AG04449 (cell line): ENCODE measurements at regions of chr17 and their contacts with region 1.

Region 1: DNA sequence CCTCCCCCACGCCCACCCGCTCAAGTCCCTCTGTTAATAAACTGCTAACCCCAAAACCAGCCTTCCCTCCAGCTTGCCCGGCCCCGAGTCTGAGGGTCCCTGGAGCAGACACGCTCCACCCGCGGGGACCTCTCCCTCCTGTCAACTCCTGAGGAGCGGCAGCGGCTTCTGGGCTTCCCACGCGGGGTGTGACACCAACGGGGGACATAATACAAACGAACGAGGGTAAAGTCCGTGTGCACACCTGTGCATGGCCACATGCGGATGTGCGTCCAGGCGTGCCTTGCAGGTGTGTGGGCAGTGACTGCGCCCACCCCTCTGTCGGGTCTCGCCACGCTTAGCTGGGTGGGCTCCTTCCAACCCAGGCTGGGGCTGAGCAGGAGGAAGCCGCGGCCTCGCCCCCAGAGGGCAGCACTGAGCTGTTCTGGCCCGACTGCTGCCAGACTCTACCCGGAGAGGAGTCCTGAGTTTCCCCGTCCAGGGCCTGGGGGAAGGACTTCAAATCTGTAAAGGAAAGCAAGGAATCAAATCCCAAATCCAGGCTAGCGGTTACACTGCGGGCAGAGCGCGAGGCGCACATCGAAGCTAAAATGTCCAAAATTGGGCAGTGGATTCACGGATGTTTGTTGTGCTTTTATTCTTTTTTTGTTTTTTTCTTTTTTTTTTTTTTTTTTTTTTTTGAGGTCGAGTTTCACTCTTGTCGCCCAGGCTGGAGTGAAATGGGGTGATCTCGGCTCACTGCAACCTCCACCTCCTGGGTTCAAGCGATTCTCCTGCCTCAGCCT is 24.2 kb upstream of the KRT17 start:
- DNase-seq: no peak
- H3K4me3 ChIP-seq: peak overlapping the region; percentile 50
- CTCF ChIP-seq: peak; percentile 95

Region 2: GRCh38 chr17:40825599-40825998 is 823.0 kb before region 1 on chr17:
- CTCF ChIA-PET with region 1: interaction called, 14 read pairs
- POLR2A ChIA-PET with region 1: no interaction called
- DNase-seq: no peak
- H3K4me3 ChIP-seq: no peak overlapping the region
- CTCF ChIP-seq: no peak

Region 3: DNA sequence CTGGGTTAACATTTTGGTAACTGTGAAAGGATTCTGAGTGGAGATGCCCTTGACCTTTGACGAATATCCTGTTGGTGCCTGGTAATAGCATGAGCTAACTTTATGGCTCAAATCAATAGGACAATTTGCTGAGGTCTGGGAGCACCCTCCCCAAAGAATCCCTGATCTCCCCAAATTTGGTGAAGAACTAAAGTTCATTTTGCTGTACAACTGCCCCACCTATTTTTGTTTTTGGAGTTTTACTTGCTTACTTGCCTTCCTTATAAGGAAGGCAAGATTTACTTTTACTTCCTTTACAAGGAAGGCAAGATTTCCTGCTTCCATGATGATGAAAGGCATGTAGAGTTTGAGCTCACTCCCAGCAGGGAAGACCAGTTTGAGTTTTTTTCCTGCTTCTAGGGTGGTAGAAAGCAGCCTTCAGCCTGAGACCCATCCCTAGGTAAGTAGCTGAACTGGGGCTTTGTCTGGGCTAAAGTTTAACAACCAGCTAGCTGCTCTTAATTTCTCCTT is 540.6 kb before region 1 on chr17:
- CTCF ChIA-PET with region 1: interaction called, 10 read pairs
- POLR2A ChIA-PET with region 1: no interaction called
- DNase-seq: no peak
- H3K4me3 ChIP-seq: peak overlapping the region; percentile 40
- CTCF ChIP-seq: no peak

Region 4: DNA sequence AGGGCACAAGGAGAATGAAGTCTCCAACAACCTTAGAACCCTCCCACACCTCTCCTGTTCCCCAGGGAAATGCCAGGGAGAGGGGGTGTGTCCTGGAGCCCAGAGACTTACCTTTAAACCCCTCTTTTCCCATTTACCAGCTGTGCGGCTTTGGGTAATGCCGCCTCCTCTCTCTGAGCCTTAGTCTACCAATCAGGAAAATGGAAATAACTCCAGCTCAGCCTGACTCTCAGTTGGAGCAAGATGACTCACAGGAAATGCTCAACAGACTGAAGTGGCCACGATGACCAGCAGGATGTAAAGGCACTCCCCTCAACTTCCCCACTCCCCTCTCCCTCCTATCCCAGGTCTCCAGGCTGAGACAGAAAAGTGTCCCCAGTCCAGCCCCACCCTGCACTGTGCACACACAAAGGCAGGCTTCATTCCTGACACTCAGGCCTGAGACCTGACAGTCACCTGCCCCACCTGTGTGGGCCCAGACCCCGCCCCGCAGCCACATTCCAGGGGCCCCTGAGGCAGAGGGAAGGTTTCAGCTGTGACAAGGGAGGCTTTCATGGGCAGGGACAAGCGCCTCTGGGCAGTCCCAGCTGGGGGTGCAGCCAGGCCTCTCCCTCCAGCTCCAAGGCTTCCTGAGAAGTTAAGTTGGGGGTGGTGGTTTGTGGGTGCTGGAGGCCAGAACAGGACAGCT is 126.9 kb before region 1 on chr17:
- CTCF ChIA-PET with region 1: interaction called, 11 read pairs
- POLR2A ChIA-PET with region 1: no interaction called
- DNase-seq: peak; percentile 37
- H3K4me3 ChIP-seq: no peak overlapping the region
- CTCF ChIP-seq: no peak

Region 5: DNA sequence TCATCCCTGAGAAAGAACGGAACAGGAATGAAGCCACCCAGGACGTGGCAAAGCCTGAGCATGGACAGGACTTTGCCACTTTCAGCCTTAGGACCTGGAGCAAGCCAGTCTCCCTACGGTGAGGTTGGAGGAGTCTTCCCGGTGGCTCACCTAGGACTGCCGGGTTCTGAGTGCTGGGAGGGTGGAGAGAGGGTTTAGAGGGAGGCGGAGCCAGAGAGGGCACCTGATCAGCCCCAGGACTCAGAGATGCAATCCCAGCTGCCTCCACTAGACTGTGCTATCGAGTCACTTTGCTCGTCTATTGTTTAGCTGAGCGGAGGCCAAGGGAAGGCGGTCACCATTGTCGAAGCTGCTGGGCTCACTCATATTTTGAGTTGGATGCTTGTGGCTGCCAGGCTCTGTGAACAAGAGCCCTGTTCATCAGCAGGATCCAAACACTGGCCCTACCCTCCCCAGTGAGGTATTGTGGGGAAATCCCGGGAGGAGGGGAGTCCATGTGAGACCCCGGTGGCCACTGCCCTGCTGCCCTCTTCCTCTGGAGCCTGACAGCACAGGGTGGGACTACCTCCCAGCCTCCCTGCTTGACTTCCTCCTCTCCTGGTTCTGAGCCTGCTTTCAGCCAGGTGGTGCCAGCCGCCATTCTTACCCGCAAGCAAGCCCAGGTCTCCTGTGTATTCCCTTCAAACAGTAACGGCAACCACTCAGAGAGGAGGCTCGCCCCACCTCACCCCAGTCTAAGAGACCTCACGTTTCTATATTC is 68.9 kb before region 1 on chr17:
- CTCF ChIA-PET with region 1: interaction called, 47 read pairs
- POLR2A ChIA-PET with region 1: no interaction called
- DNase-seq: no peak
- H3K4me3 ChIP-seq: no peak overlapping the region
- CTCF ChIP-seq: peak; percentile 83

Region 6: GRCh38 chr17:41613277-41614082 is 35.1 kb before region 1 on chr17:
- CTCF ChIA-PET with region 1: interaction called, 23 read pairs
- POLR2A ChIA-PET with region 1: no interaction called
- DNase-seq: no peak
- H3K4me3 ChIP-seq: no peak overlapping the region
- CTCF ChIP-seq: no peak